ENCODE measurements at regions of chr4 and their contacts with region 1.

Region 1: GRCh38 chr4:4995103-4995907 is 24.0 kb downstream of the CYTL1 start:
- DNase-seq: peak; percentile 61 to 85 (median 71)
- ATAC-seq: peak; percentile 45 to 75 (median 65)
- H3K4me3 ChIP-seq: no peak overlapping the region
- H3K27ac ChIP-seq: no peak overlapping the region
- H3K4me1 ChIP-seq: peaks cover 0 to 19% (median 2%) of the 10 kb centered on the region in 12 donors
- H3K27me3 ChIP-seq: peaks cover 0 to 9% (median 6%) of the 10 kb centered on the region in 9 donors
- CTCF ChIP-seq: peak; percentile 82 to 93 (median 91)
- POLR2A ChIP-seq: no peak

Region 2: DNA sequence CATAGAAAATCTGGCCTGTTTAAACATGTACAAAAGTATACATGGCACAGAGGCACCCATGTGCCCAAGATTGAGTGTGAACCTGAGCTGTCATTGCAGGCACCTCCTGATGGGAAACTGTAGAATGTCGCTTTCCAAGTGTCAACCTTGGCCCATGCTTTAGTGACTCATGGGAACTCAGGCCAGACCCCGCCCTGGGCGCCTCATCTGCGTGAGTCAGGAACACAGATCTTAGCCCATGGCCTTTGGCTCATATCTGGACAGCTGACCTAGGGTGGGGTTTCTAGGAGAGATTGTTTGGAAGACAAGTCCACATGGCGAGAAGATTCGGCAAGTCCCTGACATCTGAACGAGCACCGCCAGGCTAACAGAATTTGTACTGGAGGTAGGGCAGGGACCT is 26.0 kb before region 1 on chr4:
- intact Hi-C with region 1: no loop called
- DNase-seq: peak in 1 of 5 donors; percentile 51
- ATAC-seq: peak in 3 of 4 donors; percentile 44 to 80 (median 63)
- H3K4me3 ChIP-seq: no peak overlapping the region
- H3K27ac ChIP-seq: no peak overlapping the region
- H3K4me1 ChIP-seq: no peaks in the 10 kb centered on the region
- H3K27me3 ChIP-seq: peaks cover 0 to 4% (median 0%) of the 10 kb centered on the region in 9 donors
- CTCF ChIP-seq: no peak
- POLR2A ChIP-seq: no peak

Region 3: DNA sequence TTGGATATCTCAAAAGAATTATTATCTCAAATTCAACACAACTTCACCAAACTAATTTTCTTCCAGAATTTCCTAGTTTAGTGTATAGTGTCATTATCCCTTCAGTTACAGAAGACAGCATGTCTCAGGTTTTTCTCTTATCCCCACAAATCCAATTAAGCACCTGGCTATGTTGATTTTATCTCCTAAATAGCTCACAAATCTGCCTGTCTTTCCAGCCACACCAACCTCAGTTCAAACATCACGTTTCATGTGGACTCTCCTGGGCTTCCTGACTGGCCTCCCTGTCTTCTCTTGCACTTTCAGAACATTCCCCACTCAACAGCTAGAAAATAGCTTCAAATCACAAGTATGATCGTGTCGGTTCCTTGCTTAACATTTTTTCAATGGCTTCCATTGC is 70.8 kb after region 1 on chr4:
- intact Hi-C with region 1: no loop called
- DNase-seq: no peak
- ATAC-seq: no peak
- H3K4me3 ChIP-seq: no peak overlapping the region
- H3K27ac ChIP-seq: no peak overlapping the region
- H3K4me1 ChIP-seq: no peaks in the 10 kb centered on the region
- H3K27me3 ChIP-seq: peaks cover 0 to 4% (median 0%) of the 10 kb centered on the region in 9 donors
- CTCF ChIP-seq: no peak
- POLR2A ChIP-seq: no peak

Region 4: DNA sequence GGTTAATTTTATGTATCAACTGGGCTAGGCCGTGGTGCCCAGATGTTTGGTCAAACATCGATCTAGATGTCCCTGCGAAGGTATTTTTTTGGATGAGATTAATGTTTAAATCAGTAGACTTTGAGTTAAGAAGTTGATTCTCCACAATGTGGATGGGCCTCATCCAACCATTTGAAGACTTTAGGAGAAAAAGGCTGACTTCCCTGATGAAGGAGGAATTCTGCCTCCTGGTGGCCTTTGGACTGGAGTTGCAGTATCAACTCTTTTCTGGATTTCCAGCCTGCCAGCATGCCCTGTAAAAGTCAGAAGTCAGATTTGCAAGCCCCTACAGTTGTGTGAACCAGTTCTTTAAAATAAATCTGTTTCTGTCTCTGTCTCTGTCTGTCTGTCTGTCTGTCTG is 147.4 kb after region 1 on chr4:
- intact Hi-C with region 1: loop called in 8 of 10 experiments (anchors 2 to 10 kb)
- DNase-seq: peak in 1 of 5 donors; percentile 24
- ATAC-seq: no peak
- H3K4me3 ChIP-seq: no peak overlapping the region
- H3K27ac ChIP-seq: no peak overlapping the region
- H3K4me1 ChIP-seq: no peaks in the 10 kb centered on the region
- H3K27me3 ChIP-seq: peaks cover 0 to 4% (median 0%) of the 10 kb centered on the region in 9 donors
- CTCF ChIP-seq: peak in 10 of 12 donors; percentile 25 to 55 (median 40)
- POLR2A ChIP-seq: no peak

Region 5: GRCh38 chr4:5812506-5813229 is 817.4 kb after region 1 on chr4:
- intact Hi-C with region 1: loop called in 6 of 10 experiments (anchors 2 to 10 kb)
- DNase-seq: peak in 1 of 5 donors; percentile 32
- ATAC-seq: peak; percentile 58 to 83 (median 65)
- H3K4me3 ChIP-seq: no peak overlapping the region
- H3K27ac ChIP-seq: no peak overlapping the region
- H3K4me1 ChIP-seq: no peaks in the 10 kb centered on the region
- H3K27me3 ChIP-seq: no peaks in the 10 kb centered on the region
- CTCF ChIP-seq: peak; percentile 56 to 76 (median 71)
- POLR2A ChIP-seq: no peak

Measured in heart left ventricle (tissue), 16 donors.